GM10248 (cell line): ENCODE measurements at regions of chr22 and their contacts with region 1.

Region 1: DNA sequence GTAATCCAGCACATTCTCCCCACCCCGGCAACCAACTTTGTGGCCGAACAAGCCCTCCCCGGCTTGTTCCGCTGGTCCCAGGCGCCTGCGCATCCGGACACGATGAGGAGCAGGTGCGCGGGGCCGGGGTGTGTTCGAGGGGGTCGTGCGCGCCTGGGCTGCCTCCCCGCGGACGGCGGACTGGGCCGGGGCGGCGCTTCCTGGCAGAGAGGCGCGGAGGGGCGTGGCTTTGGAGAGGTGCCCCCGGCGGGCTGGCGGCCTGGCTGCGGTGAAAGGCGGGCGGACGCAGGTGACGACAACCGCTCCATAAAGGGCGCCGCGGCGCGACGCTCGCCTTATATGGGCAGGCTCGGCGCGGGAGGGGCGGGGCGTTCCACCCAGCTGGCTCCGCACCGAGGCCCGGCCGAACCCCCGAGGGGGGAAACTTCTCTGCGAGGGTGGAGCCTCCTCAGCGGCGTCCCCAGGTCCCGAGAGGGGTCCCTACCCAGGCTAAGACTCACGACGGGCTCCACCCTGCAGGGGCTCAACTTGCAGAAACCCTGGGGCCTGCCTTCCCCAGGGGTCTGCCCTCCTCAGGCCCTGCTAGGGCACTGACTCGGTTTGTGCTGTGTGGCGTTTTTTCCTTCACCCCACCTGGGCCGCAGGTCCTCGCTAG is 26.4 kb downstream of the TXN2 start:
- DNase-seq: peak; percentile 90
- CTCF ChIP-seq: peak; percentile 16

Region 2: GRCh38 chr22:36405671-36406538 is 49.1 kb before region 1 on chr22:
- CTCF ChIA-PET with region 1: no interaction called
- POLR2A ChIA-PET with region 1: interaction called, 14 read pairs
- DNase-seq: no peak
- CTCF ChIP-seq: no peak

Region 3: DNA sequence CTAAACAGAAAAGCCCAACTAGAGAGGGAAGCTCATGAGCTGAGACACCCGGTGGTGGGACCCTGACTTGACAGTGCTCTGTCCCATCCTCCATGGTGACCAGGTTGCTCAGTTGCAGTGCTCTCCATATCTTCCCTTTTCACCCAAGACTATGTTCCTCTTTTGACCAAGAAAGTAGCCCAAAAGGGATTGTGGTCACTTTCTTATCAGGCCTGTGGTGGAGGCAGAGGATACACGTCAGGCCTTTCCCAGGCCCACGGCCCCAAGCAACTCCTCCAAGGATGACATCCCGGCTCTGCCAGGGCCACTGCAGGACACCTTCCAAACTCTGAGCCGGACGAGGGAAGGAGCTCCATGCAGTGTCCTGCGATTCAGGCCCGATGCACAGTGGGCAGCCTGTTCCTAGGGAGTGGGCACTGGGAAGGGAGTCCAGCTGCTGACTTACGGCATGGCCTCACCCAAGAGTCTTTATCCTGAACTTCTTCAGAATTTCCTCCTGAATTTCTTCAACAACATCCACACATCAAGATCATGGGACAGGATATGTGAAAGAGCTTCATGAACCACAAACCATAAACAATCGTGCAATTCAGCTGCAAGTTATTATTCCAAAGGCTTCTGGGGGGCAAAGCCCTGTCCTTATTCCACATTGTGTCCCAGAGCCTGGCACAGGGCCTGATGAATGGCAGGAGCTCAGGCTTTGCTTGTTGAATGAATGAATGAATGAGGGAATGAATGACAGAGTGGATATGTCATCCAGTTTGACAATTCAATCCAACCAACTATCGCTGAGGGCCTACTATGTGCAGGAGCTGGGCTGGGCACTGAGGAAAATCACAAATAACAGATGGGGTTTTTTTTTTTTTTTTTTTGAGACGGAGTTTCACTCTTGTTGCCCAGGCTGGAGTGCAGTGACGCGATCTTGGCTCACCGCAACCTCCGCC is 31.3 kb before region 1 on chr22:
- CTCF ChIA-PET with region 1: no interaction called
- POLR2A ChIA-PET with region 1: no interaction called
- DNase-seq: no peak
- CTCF ChIP-seq: no peak